PC-9 (cell line): ENCODE measurements at regions of chr3 and their contacts with region 1.

Region 1: DNA sequence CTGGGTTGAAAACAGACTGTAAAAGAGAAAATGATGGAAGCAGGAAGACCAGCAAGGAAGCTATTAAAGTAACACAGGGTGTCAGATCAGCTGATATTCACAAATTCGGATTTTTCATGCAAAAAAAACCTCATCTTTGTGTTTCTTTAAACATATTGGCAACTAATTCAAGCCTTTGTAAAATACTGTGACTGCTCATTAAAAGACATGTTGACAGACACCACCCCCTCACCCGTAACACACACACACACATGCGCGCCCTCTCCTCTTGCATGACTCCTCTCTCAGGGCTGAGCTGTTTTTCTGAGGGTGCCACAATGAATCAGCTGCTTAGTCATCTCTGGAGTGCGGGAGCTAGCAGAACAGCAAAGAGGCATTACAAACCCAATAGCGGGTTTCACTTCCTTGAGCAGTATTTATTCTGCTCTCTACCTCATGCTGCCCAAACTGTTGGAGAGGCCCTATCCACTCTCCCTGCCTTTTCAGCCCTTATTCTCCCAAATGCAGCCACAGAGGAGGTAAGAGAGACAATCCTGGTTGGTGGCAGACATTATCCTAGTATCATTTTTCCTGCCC is 35.8 kb upstream of the CCDC80 start:
- DNase-seq: peak; percentile 53 to 86
- H3K4me3 ChIP-seq: no peak overlapping the region
- H3K27ac ChIP-seq: peak overlapping the region; percentile 87
- H3K4me1 ChIP-seq: peaks cover 57% of the 10 kb centered on the region
- H3K27me3 ChIP-seq: no peaks in the 10 kb centered on the region
- CTCF ChIP-seq: no peak

Region 2: GRCh38 chr3:112653209-112653871 is 23.4 kb before region 1 on chr3:
- CTCF ChIA-PET with region 1: interaction called, 3 read pairs
- POLR2A ChIA-PET with region 1: interaction called, 11 read pairs
- intact Hi-C with region 1: loop called (anchors 1 kb)
- DNase-seq: peak; percentile 76 to 96
- H3K4me3 ChIP-seq: no peak overlapping the region
- H3K27ac ChIP-seq: peak overlapping the region; percentile 92
- H3K4me1 ChIP-seq: peaks cover 55% of the 10 kb centered on the region
- H3K27me3 ChIP-seq: no peaks in the 10 kb centered on the region
- CTCF ChIP-seq: no peak

Region 3: GRCh38 chr3:112873632-112874031 is 196.9 kb after region 1 on chr3:
- CTCF ChIA-PET with region 1: no interaction called
- POLR2A ChIA-PET with region 1: no interaction called
- intact Hi-C with region 1: no loop called
- DNase-seq: no peak
- H3K4me3 ChIP-seq: no peak overlapping the region
- H3K27ac ChIP-seq: no peak overlapping the region
- H3K4me1 ChIP-seq: no peaks in the 10 kb centered on the region
- H3K27me3 ChIP-seq: no peaks in the 10 kb centered on the region
- CTCF ChIP-seq: no peak